ENCODE measurements at regions of chr11 and their contacts with region 1.

Region 1: GRCh38 chr11:75328426-75329277 is 22.8 kb downstream of the ARRB1 start:
- DNase-seq: peak; percentile 28 to 75 (median 61)
- ATAC-seq: peak; percentile 93 to 97 (median 95)
- H3K4me3 ChIP-seq: peak overlapping the region in 1 of 2 donors; percentile 25
- H3K4me3 Mint-ChIP-seq: peak overlapping the region; percentile 41 to 64 (median 43)
- H3K27ac ChIP-seq: peak overlapping the region; percentile 77
- H3K27ac Mint-ChIP-seq: peak overlapping the region; percentile 90 to 92
- H3K4me1 ChIP-seq: peaks cover 30 to 40% of the 10 kb centered on the region in 2 experiments
- H3K4me1 Mint-ChIP-seq: peaks cover 69 to 78% (median 70%) of the 10 kb centered on the region in 3 donors
- H3K27me3 ChIP-seq: no peaks in the 10 kb centered on the region
- H3K27me3 Mint-ChIP-seq: no peaks in the 10 kb centered on the region

Region 2: GRCh38 chr11:75380245-75380644 is 51.6 kb after region 1 on chr11:
- CTCF ChIA-PET with region 1: interaction called, 6 to 11 read pairs
- POLR2A ChIA-PET with region 1: no interaction called
- DNase-seq: no peak
- ATAC-seq: no peak
- H3K4me3 ChIP-seq: no peak overlapping the region
- H3K4me3 Mint-ChIP-seq: no peak overlapping the region
- H3K27ac ChIP-seq: no peak overlapping the region
- H3K27ac Mint-ChIP-seq: no peak overlapping the region
- H3K4me1 ChIP-seq: peaks cover 10 to 25% of the 10 kb centered on the region in 2 experiments
- H3K4me1 Mint-ChIP-seq: peaks cover 17 to 26% (median 21%) of the 10 kb centered on the region in 3 donors
- H3K27me3 ChIP-seq: peaks cover 0 to 4% of the 10 kb centered on the region in 2 experiments
- H3K27me3 Mint-ChIP-seq: no peaks in the 10 kb centered on the region

Region 3: GRCh38 chr11:76314741-76315090 is 986.1 kb after region 1 on chr11:
- CTCF ChIA-PET with region 1: no interaction called
- POLR2A ChIA-PET with region 1: no interaction called
- DNase-seq: no peak
- ATAC-seq: no peak
- H3K4me3 ChIP-seq: no peak overlapping the region
- H3K4me3 Mint-ChIP-seq: no peak overlapping the region
- H3K27ac ChIP-seq: no peak overlapping the region
- H3K27ac Mint-ChIP-seq: no peak overlapping the region
- H3K4me1 ChIP-seq: peaks cover 0 to 6% of the 10 kb centered on the region in 2 experiments
- H3K4me1 Mint-ChIP-seq: peaks cover 0 to 9% (median 0%) of the 10 kb centered on the region in 3 donors
- H3K27me3 ChIP-seq: peaks cover 0 to 28% of the 10 kb centered on the region in 2 experiments
- H3K27me3 Mint-ChIP-seq: peaks cover 4 to 7% of the 10 kb centered on the region in 2 donors

Measured in T-cell (primary cell).